Prostate gland (tissue), 2 donors: ENCODE measurements at regions of chr3 and their contacts with region 1.

Region 1: DNA sequence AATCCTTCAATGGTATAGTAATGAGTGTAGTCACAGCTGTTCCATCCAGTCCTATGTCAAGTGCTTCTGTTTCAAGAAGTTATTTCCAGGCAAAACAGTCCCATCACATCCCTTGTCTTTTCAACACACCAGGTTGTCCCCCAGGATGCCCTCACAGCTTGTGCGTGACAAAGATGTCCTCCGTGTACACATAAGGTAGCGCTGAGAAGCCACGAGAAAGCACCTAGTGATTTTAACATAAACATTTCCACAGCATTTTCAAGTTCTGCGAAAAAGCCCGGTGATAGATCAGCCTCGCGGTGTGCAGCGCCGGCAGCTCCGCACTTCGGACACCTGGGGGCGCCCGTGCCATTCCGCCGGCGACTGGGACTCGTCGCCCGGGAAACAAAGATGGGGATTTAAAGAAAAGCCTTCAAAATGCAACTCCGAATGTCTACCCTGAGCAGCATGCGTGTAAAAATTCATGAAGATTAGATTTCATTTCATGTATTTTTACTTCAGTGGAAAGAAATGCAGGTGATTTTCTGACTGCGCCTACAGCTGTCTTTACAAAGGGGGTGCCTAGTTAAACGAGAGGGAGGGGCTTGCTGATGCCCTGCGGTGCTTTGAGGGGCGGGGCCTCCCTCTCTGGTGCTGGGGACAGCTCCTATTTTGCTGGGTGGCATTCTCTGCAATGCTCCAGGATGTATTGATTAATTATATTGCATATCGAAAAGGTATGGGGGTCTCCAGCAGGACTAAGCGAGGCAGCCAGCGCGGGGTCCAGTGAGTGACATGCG is 49.9 kb downstream of the KY start:
- DNase-seq: peak; percentile 27
- H3K4me3 ChIP-seq: no peak overlapping the region
- H3K27ac ChIP-seq: no peak overlapping the region
- H3K4me1 ChIP-seq: no peaks in the 10 kb centered on the region
- H3K27me3 ChIP-seq: no peaks in the 10 kb centered on the region
- CTCF ChIP-seq: peak; percentile 64 to 82 (median 74)
- POLR2A ChIP-seq: no peak

Region 2: DNA sequence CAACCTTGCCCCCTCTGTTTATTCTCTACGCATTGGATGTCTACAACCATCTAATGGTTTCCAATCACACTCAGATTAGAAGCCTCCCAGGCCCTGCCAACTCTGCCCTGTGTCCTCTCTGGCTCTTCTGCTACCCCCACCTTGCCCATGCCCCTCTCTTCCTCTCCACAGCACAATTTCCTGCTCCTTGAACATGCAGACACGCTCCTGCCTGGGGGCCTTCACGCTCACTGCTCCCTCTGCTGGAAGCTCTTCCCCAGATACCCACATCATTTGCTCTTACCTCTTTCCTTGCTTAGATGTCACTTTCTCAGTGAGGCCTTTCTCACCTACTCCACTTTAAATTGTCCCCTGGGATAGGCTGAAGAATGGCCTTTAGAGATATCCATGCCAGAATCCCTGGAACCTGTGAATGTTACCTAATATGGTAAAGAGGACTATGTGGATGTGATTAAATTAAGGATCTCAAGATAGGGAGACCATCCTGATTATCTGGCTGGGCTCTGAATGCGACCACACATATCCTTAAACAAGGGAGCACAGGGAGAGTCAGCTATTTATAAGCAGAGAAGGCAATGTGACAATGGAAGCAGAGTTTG is 40.1 kb after region 1 on chr3:
- intact Hi-C with region 1: loop called (anchors 5 kb)
- DNase-seq: no peak
- H3K4me3 ChIP-seq: no peak overlapping the region
- H3K27ac ChIP-seq: no peak overlapping the region
- H3K4me1 ChIP-seq: no peaks in the 10 kb centered on the region
- H3K27me3 ChIP-seq: no peaks in the 10 kb centered on the region
- CTCF ChIP-seq: peak in 1 of 4 experiments; percentile 28
- POLR2A ChIP-seq: no peak

Region 3: GRCh38 chr3:134677196-134677986 is 76.5 kb after region 1 on chr3:
- intact Hi-C with region 1: no loop called
- DNase-seq: no peak
- H3K4me3 ChIP-seq: no peak overlapping the region
- H3K27ac ChIP-seq: no peak overlapping the region
- H3K4me1 ChIP-seq: no peaks in the 10 kb centered on the region
- H3K27me3 ChIP-seq: no peaks in the 10 kb centered on the region
- CTCF ChIP-seq: no peak
- POLR2A ChIP-seq: no peak

Region 4: GRCh38 chr3:134754768-134755559 is 154.1 kb after region 1 on chr3:
- intact Hi-C with region 1: loop called (anchors 2 kb)
- DNase-seq: peak; percentile 8
- H3K4me3 ChIP-seq: no peak overlapping the region
- H3K27ac ChIP-seq: no peak overlapping the region
- H3K4me1 ChIP-seq: no peaks in the 10 kb centered on the region
- H3K27me3 ChIP-seq: no peaks in the 10 kb centered on the region
- CTCF ChIP-seq: peak in 2 of 4 experiments; percentile 39 to 41
- POLR2A ChIP-seq: no peak

Region 5: GRCh38 chr3:135503760-135504686 is 903.1 kb after region 1 on chr3:
- intact Hi-C with region 1: loop called (anchors 5 kb)
- DNase-seq: peak; percentile 35
- H3K4me3 ChIP-seq: no peak overlapping the region
- H3K27ac ChIP-seq: no peak overlapping the region
- H3K4me1 ChIP-seq: no peaks in the 10 kb centered on the region
- H3K27me3 ChIP-seq: no peaks in the 10 kb centered on the region
- CTCF ChIP-seq: peak in 3 of 4 experiments; percentile 38 to 51 (median 46)
- POLR2A ChIP-seq: no peak

Region 6: DNA sequence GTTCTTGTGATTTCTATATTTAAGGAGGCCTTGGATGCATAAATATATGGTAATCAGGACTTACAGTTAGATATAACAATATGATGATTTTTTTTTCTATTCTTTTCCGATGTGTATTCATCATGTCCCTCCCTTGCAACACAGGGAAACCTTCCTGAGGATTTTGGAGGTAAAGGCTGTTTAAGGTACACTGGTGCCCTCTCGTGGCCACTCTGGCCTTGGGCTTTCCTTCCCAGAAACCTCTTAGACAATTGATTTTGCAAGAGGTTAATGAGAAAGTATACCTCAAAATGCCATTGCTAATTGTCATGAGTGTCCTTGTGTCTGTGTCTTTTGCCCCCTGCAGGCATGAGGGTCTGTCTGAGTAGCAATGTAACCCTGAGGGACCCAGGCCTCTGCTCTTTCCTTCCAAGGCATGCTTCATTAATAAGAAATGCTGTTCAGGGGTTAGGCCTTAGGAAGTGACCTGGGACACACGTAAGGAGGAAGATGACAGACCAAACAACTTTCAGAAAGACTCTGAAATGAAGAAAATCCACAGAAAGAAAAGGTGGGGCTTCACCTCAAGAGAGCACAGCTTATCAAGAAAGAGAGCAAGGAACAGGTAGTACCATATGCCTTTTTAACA is 1294.3 kb after region 1 on chr3:
- intact Hi-C with region 1: loop called (anchors 2 kb)
- DNase-seq: peak; percentile 70
- H3K4me3 ChIP-seq: no peak overlapping the region
- H3K27ac ChIP-seq: no peak overlapping the region
- H3K4me1 ChIP-seq: no peaks in the 10 kb centered on the region
- H3K27me3 ChIP-seq: no peaks in the 10 kb centered on the region
- CTCF ChIP-seq: peak; percentile 46 to 81 (median 76)
- POLR2A ChIP-seq: no peak